ENCODE measurements at regions of chr15 and their contacts with region 1.

Region 1: GRCh38 chr15:72793766-72794660 is 10.5 kb upstream of the ADPGK start:
- DNase-seq: no peak

Region 2: DNA sequence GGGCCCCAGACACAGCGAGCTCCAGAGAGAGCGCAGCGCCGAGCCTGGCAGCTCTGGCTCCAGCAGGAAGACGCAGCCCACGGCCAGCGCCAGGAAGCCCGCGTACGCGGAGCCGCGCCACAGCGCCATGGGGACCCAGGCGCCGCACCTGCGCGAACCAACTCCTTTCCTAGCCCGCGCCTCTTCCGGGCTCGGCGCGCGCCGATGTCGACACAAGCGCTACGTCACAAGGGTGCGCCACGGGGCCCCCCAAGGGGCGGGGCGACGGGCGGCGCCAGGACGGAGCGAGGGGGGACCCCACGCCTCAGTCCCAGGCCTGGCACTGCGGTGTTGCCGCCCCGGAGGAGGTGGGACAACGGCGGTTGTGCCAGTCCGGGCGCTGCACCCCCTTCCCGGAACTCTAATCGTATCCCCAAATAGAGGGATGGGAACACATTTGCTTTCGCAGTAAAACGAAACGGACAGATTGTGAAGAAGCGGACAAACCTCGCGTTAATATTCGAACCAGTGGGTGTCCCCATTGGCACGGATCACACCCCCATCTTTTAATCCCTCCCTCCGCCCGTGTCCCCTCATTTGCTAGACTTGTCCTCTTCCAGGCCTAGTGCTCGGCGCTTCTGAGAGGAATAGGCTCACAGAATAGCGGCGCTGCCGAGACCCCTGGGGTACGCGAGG is 10.3 kb before region 1 on chr15 and contains the start of gene ADPGK:
- CTCF ChIA-PET with region 1: no interaction called
- POLR2A ChIA-PET with region 1: interaction called, 11 read pairs
- DNase-seq: peak; percentile 94

Region 3: GRCh38 chr15:72820278-72820677 is 26.3 kb after region 1 on chr15:
- CTCF ChIA-PET with region 1: no interaction called
- POLR2A ChIA-PET with region 1: no interaction called
- DNase-seq: no peak